H1 (cell line): ENCODE measurements at regions of chr3 and their contacts with region 1.

Region 1: DNA sequence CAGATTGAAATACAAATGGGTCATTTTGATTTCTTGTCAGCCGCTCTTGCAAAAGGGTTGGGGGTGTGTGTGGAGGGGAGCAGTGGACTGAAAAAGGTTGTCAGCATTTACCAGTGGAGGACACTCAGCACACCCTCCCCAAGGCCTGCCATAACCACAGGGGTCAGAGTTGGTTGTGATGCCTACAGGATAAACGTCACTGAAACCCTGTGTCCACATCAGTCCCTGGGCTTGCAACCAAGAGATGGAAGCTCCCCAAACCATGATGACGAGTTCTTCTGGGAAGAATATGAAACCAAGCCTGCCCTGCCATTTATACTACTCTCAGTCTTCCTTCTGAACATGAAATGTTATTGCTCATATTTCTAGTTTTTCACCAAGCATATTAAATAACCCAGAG is 54.0 kb upstream of the UMPS start:
- DNase-seq: no peak
- H3K4me3 ChIP-seq: no peak overlapping the region
- H3K27ac ChIP-seq: no peak overlapping the region
- H3K4me1 ChIP-seq: no peaks in the 10 kb centered on the region
- H3K27me3 ChIP-seq: no peaks in the 10 kb centered on the region
- CTCF ChIP-seq: no peak
- EP300 ChIP-seq: no peak
- POLR2A ChIP-seq: no peak
- RAD21 ChIP-seq: no peak

Region 2: DNA sequence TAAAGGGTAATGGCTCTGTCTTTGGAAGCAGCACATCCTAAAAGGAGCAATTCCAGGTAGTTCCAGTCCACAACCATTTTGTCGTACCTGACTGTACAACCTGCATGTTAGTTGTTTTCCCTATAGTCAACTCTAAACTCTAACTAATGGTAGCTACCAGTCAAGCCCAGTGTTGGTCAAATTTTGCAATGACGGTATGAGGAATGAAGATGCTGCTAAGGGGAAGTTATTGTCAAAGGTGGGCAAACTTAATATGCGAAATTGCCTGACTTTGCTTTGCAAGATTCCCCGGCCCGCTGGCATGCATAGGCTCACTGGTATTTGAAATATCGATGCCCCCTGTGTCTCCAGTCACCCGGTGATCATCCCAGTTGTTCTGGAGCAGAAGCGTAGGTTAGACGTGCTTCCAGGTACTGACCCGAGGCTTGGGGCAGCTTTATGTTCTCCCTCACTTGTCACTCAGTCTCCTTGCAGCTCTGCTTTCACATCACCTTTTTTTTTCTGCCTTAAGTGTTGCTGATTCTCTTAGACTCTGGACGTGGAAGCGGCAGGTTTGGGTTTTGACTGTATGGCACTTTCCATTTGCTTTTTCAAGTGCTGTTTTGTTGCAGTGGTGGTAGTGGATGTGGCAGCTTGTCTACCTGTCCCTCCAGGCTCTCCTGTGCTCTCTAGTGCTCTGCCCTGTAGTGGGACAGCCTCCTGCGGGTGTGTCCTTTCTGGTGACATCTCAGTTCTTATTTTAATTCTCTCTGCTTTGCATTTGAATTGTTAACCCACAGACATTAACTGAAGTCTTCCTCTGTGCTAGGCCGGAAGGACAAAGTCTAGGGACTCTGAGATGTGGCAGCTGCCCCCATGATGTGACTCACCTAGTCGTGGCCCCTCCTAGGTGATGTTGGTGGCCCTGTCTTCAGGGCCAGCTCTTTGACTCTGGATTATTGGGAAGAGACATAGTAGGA is 41.7 kb before region 1 on chr3:
- CTCF ChIA-PET with region 1: interaction called, 12 read pairs
- POLR2A ChIA-PET with region 1: no interaction called
- DNase-seq: no peak
- H3K4me3 ChIP-seq: no peak overlapping the region
- H3K27ac ChIP-seq: no peak overlapping the region
- H3K4me1 ChIP-seq: peaks cover 4 to 23% (median 13%) of the 10 kb centered on the region in 4 experiments
- H3K27me3 ChIP-seq: no peaks in the 10 kb centered on the region; a peak in 1 of 7 replicates
- CTCF ChIP-seq: no peak
- EP300 ChIP-seq: no peak
- POLR2A ChIP-seq: no peak
- RAD21 ChIP-seq: no peak

Region 3: DNA sequence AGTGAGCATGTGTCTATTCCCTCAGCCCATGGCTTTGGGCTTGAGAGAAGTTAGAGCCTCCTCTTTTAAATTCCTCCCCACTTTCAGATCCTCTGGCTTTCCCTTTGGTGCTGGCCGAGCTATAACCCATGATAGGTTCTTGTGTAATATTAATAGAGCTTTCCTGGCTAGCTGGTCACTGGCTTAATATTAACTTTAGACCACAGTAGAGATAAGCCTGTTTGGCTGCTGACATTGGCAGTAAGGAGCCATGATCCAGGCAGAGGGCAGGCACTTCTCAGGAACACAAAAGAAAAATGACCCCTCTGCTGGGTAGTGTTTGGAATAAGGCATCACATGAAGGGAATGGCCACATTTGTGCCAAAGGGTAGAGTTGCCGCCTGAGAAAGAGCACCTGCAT is 11.4 kb before region 1 on chr3:
- CTCF ChIA-PET with region 1: interaction called, 11 read pairs
- POLR2A ChIA-PET with region 1: no interaction called
- DNase-seq: no peak
- H3K4me3 ChIP-seq: no peak overlapping the region
- H3K27ac ChIP-seq: no peak overlapping the region
- H3K4me1 ChIP-seq: no peaks in the 10 kb centered on the region
- H3K27me3 ChIP-seq: no peaks in the 10 kb centered on the region
- CTCF ChIP-seq: no peak
- EP300 ChIP-seq: no peak
- POLR2A ChIP-seq: no peak
- RAD21 ChIP-seq: no peak